ENCODE measurements at regions of chr12 and their contacts with region 1.

Region 1: GRCh38 chr12:85310456-85311076 is 30.5 kb downstream of the ALX1 start:
- DNase-seq: no peak
- H3K4me3 ChIP-seq: no peak overlapping the region
- H3K27ac ChIP-seq: no peak overlapping the region
- H3K4me1 ChIP-seq: no peaks in the 10 kb centered on the region
- H3K27me3 ChIP-seq: no peaks in the 10 kb centered on the region
- CTCF ChIP-seq: peak; percentile 58; the same call in 1 of the 2 replicates

Region 2: GRCh38 chr12:85448548-85449139 is 138.1 kb after region 1 on chr12:
- CTCF ChIA-PET with region 1: no interaction called
- POLR2A ChIA-PET with region 1: no interaction called
- intact Hi-C with region 1: loop called (anchors 2 kb)
- DNase-seq: no peak
- H3K4me3 ChIP-seq: no peak overlapping the region
- H3K27ac ChIP-seq: no peak overlapping the region
- H3K4me1 ChIP-seq: no peaks in the 10 kb centered on the region
- H3K27me3 ChIP-seq: no peaks in the 10 kb centered on the region
- CTCF ChIP-seq: peak; percentile 64